Left cardiac atrium (tissue), 4 donors: ENCODE measurements at regions of chrX and their contacts with region 1.

Region 1: GRCh38 chrX:101287402-101287801 is 3.7 kb downstream of the TAF7L start:
- DNase-seq: no peak
- ATAC-seq: no peak

Region 2: DNA sequence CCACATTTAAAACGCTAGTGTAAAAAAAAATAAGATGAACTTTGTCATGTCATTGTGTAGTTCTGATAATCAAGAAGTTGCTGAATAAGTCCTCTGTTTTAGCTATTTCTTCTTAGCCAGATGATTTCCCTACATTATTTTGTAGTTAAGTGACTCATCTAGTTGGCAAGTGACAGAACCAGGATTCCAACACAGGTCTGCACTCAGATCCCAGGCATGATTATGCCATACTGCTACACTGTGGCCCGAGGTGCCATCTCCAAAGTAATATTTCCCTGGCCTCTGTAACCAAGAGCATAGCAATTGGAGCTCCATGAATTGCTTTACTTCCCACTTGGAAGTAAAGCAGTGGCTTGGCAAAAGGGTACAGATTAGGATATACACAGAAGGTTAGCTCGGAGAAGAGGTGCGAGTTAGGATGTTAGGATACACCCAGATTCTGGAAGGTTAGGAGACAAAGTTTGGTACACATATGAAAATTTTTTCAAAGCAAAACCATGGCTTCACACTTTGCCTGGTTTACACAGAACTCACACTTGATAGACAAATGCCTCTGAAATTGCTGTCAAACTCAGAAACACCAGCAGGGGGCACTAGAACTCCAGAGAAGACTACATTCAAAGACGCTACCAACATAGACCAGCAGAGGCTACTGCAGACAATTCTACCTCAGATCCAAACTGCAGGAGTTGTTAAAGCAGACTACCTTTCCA is 602.0 kb before region 1 on chrX:
- intact Hi-C with region 1: loop called in 1 of 2 experiments (anchors 10 kb)
- DNase-seq: peak; percentile 34
- ATAC-seq: peak; percentile 83 to 86

Region 3: GRCh38 chrX:100895365-100896075 is 391.9 kb before region 1 on chrX:
- intact Hi-C with region 1: loop called in 1 of 2 experiments (anchors 5 kb)
- DNase-seq: no peak
- ATAC-seq: no peak